Activated naive CD8-positive, alpha-beta T cell treated with anti-CD3 and anti-CD28 coated beads, Interleukin-2, amount 10 ng/mL, durations not matched to agents 7 days and 5 days (primary cell): ENCODE measurements at regions of chr3 and their contacts with region 1.

Region 1: GRCh38 chr3:46208167-46208704 is at the start of gene CCR1:
- DNase-seq: peak; percentile 79
- ATAC-seq: peak; percentile 62
- H3K4me3 Mint-ChIP-seq: peak within 1 kb of the TSS; percentile 88
- H3K27ac Mint-ChIP-seq: peak within 1 kb of the TSS; percentile 91
- H3K4me1 Mint-ChIP-seq: peaks cover 52% of the 10 kb centered on the region
- H3K27me3 Mint-ChIP-seq: no peaks in the 10 kb centered on the region
- total RNA-seq, gene CCR1: 58.6 to 63.9 TPM

Region 2: GRCh38 chr3:46089237-46090011 is 118.8 kb before region 1 on chr3:
- POLR2A ChIA-PET with region 1: interaction called, 83 read pairs
- DNase-seq: no peak
- ATAC-seq: peak; percentile 58
- H3K4me3 Mint-ChIP-seq: no peak overlapping the region
- H3K27ac Mint-ChIP-seq: no peak overlapping the region
- H3K4me1 Mint-ChIP-seq: peaks cover 69% of the 10 kb centered on the region
- H3K27me3 Mint-ChIP-seq: no peaks in the 10 kb centered on the region

Region 3: GRCh38 chr3:46098319-46098761 is 109.9 kb before region 1 on chr3:
- POLR2A ChIA-PET with region 1: interaction called, 83 read pairs
- DNase-seq: peak; percentile 65
- ATAC-seq: peak; percentile 66
- H3K4me3 Mint-ChIP-seq: peak overlapping the region; percentile 75
- H3K27ac Mint-ChIP-seq: peak overlapping the region; percentile 99
- H3K4me1 Mint-ChIP-seq: peaks cover 69% of the 10 kb centered on the region
- H3K27me3 Mint-ChIP-seq: no peaks in the 10 kb centered on the region

Region 4: GRCh38 chr3:46105306-46105919 is 102.8 kb before region 1 on chr3:
- POLR2A ChIA-PET with region 1: interaction called, 22 read pairs
- DNase-seq: no peak
- ATAC-seq: no peak
- H3K4me3 Mint-ChIP-seq: no peak overlapping the region
- H3K27ac Mint-ChIP-seq: peak overlapping the region; percentile 72
- H3K4me1 Mint-ChIP-seq: peaks cover 70% of the 10 kb centered on the region
- H3K27me3 Mint-ChIP-seq: no peaks in the 10 kb centered on the region

Region 5: DNA sequence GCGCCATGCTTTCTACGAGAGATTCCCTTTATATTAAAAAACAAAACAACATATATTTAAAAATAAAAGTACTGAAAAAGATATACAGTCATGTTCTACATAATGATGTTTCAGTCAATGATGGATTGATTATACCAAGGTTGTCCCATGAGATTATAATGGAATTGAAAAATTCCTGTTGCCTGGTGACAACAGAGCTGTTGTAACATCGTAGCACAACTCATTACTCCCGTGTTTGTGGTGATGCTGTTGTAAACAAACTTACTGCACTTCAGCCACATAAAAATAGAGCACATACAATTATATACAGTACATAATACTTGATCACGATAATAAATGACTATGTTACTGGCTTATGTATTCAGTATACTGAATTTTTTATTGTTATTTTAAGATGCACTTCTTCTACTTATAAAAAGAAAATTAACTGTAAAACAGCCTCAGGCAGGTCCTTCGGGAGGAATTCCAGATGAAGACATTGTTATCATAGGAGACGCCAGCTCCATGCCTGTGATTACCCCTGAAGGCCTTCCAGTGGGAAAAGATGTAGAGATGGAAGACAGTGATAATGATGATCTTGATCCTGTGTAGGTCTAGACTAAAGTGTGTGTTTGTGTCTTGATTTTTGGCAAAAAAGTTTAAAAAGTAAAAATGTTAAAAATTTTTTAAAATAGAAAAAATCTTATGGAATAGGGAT is 11.8 kb before region 1 on chr3:
- POLR2A ChIA-PET with region 1: interaction called, 13 read pairs
- DNase-seq: no peak
- ATAC-seq: no peak
- H3K4me3 Mint-ChIP-seq: no peak overlapping the region
- H3K27ac Mint-ChIP-seq: no peak overlapping the region
- H3K4me1 Mint-ChIP-seq: peaks cover 9% of the 10 kb centered on the region
- H3K27me3 Mint-ChIP-seq: peaks cover 5% of the 10 kb centered on the region

Region 6: DNA sequence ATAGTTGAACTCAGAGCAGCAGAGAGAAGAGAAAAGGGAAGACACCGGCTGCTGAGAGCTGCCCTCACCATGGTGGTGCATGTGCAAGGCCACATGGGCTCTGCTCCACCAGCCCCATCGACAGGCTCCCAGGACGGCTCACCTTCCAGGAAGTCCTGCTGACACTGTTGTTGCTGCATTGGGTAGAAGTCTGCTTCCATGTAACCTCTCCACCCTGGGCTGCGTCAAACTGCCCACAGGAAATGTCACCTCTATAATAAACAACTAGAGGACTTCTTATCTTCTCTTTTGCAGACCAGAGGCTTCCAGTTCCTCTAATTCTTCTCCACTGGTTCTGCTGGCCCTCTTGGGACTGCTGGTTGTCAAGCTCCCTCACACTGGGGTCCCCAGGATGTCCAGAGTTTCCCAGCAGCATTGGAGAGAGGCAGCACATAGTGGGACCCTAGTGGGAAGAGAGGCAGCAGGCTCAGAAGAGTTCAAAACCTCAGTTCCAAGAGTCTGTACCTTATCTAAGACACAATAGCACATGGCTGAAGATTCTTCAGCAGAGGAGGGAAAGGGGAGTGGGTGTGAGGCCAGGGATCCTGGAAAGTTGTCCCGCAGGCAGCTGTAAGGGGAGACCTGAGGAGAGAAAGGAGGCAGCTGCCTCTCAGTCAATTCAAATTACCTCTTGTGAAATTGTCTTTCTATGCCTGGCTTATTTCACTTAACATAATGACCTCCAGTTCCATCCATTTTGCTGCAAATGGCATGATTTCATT is 28.2 kb after region 1 on chr3:
- POLR2A ChIA-PET with region 1: no interaction called
- DNase-seq: no peak
- ATAC-seq: no peak
- H3K4me3 Mint-ChIP-seq: no peak overlapping the region
- H3K27ac Mint-ChIP-seq: no peak overlapping the region
- H3K4me1 Mint-ChIP-seq: peaks cover 10% of the 10 kb centered on the region
- H3K27me3 Mint-ChIP-seq: peaks cover 14% of the 10 kb centered on the region

Region 7: DNA sequence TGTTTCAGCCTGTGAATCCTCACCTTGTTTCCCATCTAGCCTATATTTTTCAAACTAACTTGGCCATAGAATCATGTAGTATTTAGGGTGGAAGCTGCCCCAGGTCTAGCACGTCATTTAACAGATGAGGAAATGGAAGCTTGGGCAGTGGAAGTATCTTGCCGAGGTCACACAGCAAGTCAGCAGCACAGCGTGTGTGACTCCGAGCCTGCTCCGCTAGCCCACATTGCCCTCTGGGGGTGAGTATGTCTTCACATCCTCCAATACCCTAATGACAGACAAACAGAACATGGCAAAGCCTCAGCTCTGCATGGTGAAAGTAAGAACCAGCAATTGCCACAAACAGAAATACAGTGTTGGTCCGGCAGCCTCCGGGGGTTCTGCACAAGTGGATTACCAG is 160.3 kb after region 1 on chr3:
- POLR2A ChIA-PET with region 1: interaction called, 57 read pairs
- DNase-seq: peak; percentile 51
- ATAC-seq: peak; percentile 59
- H3K4me3 Mint-ChIP-seq: no peak overlapping the region
- H3K27ac Mint-ChIP-seq: peak overlapping the region; percentile 71
- H3K4me1 Mint-ChIP-seq: peaks cover 65% of the 10 kb centered on the region
- H3K27me3 Mint-ChIP-seq: no peaks in the 10 kb centered on the region